ENCODE measurements at regions of chr15 and their contacts with region 1.

Region 1: DNA sequence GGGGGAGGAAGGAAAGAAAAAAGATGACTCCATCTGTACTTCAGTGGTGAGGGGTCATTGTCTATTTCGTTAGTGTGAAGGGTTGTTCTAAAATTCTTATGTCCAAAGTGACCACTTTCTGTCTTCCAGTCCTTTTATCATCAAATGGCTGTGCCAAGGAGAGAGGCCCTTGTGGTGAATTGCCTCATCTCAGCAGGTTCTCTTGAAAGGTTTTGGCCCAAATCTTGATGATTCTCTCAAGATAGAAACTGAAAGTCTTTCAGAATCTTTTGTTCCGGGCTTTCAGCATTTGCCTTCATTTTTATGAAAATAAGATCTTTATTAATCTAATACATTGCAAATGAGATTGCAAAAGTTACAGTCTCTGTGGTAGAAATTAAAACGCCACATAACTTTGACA is 575.8 kb downstream of the RSL24D1 start:
- DNase-seq: no peak
- ATAC-seq: no peak
- H3K4me3 ChIP-seq: no peak overlapping the region
- H3K27ac ChIP-seq: no peak overlapping the region
- H3K4me1 ChIP-seq: no peaks in the 10 kb centered on the region
- H3K27me3 ChIP-seq: no peaks in the 10 kb centered on the region
- CTCF ChIP-seq: no peak

Region 2: GRCh38 chr15:54540721-54541120 is 80.2 kb before region 1 on chr15:
- intact Hi-C with region 1: no loop called
- DNase-seq: no peak
- ATAC-seq: no peak
- H3K4me3 ChIP-seq: no peak overlapping the region
- H3K27ac ChIP-seq: no peak overlapping the region
- H3K4me1 ChIP-seq: no peaks in the 10 kb centered on the region
- H3K27me3 ChIP-seq: no peaks in the 10 kb centered on the region
- CTCF ChIP-seq: no peak

Region 3: GRCh38 chr15:54559405-54560069 is 61.4 kb before region 1 on chr15:
- intact Hi-C with region 1: loop called in 1 of 10 experiments (anchors 10 kb)
- DNase-seq: peak in 1 of 2 donors; percentile 31
- ATAC-seq: peak in 1 of 8 donors; percentile 46
- H3K4me3 ChIP-seq: no peak overlapping the region
- H3K27ac ChIP-seq: no peak overlapping the region
- H3K4me1 ChIP-seq: no peaks in the 10 kb centered on the region
- H3K27me3 ChIP-seq: no peaks in the 10 kb centered on the region
- CTCF ChIP-seq: no peak

Measured in heart right ventricle (tissue), 16 donors.